ENCODE measurements at regions of chr6 and their contacts with region 1.

Region 1: GRCh38 chr6:137776786-137777686 is 90.0 kb upstream of the TNFAIP3 start:
- DNase-seq: no peak
- H3K4me3 ChIP-seq: no peak overlapping the region
- H3K27ac ChIP-seq: no peak overlapping the region
- H3K4me1 ChIP-seq: peaks cover 3% of the 10 kb centered on the region
- H3K27me3 ChIP-seq: no peaks in the 10 kb centered on the region
- CTCF ChIP-seq: no peak
- EP300 ChIP-seq: no peak
- POLR2A ChIP-seq: no peak

Region 2: DNA sequence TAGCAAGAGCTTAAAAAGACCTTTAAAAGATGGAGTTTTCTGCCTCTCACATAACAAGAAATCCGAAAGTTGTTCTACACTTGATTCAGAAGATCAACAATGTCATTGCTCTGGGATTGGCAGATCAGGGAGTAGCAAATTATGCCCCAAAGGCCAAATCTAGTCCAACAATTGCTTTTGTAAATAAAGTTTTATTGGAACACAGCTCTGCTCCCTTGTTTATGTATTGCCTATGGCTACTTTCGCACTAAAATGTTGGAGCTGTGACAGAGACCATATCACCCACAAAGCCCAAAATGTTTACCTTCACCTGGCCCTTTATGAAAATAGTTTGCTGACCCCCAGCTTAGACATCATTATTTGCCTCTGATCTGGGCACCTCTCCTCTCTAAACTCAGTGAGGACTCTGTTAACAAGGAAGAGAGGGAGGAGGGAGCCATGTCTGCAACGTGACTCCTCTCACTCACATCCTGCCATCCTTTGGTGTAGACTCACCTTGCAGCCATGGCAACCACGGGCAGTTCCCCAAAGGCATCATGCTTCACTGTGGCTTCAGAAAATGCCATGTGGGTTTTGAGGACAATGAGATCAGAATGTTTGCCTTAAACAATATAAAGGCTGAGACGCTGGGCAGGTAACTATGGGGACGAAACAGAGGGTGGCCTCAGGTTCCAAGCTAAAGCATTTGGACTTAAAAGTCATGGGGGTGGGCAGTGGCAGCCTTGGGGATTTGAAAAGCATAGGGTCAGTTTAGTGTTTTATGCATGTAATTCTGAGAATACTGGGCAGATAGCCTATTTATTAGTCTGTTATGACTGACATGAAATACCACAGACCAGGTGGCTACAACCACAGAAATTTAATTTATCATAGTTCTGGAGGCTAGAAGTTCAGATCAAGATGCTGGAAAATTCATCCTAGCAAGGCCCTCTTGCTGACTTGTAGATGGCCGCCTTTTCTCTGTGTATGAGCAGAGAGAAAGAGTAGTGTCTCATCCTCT is 59.7 kb before region 1 on chr6:
- intact Hi-C with region 1: loop called in 1 of 4 experiments (anchors 2 kb)
- DNase-seq: no peak
- H3K4me3 ChIP-seq: no peak overlapping the region
- H3K27ac ChIP-seq: no peak overlapping the region
- H3K4me1 ChIP-seq: no peaks in the 10 kb centered on the region
- H3K27me3 ChIP-seq: no peaks in the 10 kb centered on the region
- CTCF ChIP-seq: no peak
- EP300 ChIP-seq: no peak
- POLR2A ChIP-seq: no peak